ENCODE measurements at regions of chr19 and their contacts with region 1.

Region 1: DNA sequence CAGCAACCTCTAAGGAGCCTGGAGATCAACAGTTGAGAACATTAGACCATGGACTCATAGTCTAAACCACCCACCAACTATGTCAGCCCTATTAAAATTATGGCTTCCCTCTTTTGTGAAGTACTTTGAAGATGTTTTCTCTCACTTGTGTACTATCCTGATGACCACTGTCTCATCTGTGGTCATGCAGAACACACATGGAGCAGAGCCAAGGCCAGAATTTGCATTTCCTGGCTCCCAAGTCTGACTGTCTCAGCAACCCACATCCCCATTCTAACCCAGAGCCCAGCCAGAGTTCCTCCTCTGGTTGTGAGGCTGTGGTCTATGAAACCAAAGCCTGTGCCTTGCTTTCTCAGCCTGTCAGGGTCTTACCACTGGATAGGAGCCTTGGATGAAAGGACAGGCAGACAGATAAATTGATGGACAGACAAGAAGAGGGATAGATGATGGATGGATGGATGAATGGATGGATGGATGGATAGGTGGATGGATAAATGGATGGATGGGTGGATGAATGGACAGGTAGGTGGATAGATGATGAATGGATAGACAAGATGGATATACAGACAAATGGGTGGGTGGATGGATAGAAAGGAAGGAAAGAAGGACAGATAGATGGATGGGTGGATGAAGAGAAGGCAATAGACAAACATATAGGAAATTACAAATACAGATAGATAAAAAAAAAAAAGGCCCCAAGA is 35.4 kb downstream of the ZNF557 start:
- DNase-seq: no peak
- H3K4me3 ChIP-seq: no peak overlapping the region
- CTCF ChIP-seq: no peak
- POLR2A ChIP-seq: no peak

Region 2: DNA sequence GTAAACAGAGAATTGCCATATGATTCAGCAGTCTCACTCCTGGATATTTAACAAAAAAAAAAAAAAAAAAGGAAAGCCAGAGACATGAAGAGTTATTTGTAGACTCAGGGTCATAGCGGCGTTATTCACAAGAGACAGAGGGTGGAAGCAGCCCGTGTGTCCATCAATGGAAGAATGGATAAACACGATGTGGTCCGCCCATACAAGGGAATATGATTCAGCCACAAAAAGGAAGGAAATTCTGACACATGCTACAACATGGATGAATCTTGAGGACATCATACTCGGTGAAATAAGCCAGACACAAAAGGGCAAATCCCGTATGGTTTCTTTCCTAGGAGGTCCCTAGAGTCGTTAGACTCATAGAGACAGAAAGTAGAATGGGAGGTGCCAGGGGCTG is 954.6 kb before region 1 on chr19:
- intact Hi-C with region 1: loop called (anchors 10 kb)
- DNase-seq: no peak
- H3K4me3 ChIP-seq: no peak overlapping the region
- CTCF ChIP-seq: no peak
- POLR2A ChIP-seq: no peak

Region 3: GRCh38 chr19:7337380-7338194 is 232.7 kb after region 1 on chr19:
- intact Hi-C with region 1: loop called (anchors 5 kb)
- DNase-seq: peak; percentile 32 to 81
- H3K4me3 ChIP-seq: no peak overlapping the region
- CTCF ChIP-seq: no peak
- POLR2A ChIP-seq: no peak